B cell (primary cell): ENCODE measurements at regions of chr11 and their contacts with region 1.

Region 1: GRCh38 chr11:19951558-19952115 is 208.6 kb downstream of the DBX1 start:
- DNase-seq: peak; percentile 66
- ATAC-seq: peak; percentile 47
- H3K4me3 ChIP-seq: peak overlapping the region; percentile 27 to 61 (median 46)
- H3K4me3 Mint-ChIP-seq: peak overlapping the region; percentile 77
- H3K27ac ChIP-seq: no peak overlapping the region
- H3K27ac Mint-ChIP-seq: no peak overlapping the region
- H3K4me1 ChIP-seq: peaks cover 4% of the 10 kb centered on the region in 2 donors
- H3K4me1 Mint-ChIP-seq: peaks cover 8% of the 10 kb centered on the region
- H3K27me3 ChIP-seq: peaks cover 0 to 4% (median 2%) of the 10 kb centered on the region in 4 experiments
- H3K27me3 Mint-ChIP-seq: peaks cover 35% of the 10 kb centered on the region
- CTCF ChIP-seq: peak; percentile 79

Region 2: GRCh38 chr11:19628018-19628417 is 323.6 kb before region 1 on chr11:
- CTCF ChIA-PET with region 1: no interaction called
- POLR2A ChIA-PET with region 1: no interaction called
- intact Hi-C with region 1: no loop called
- DNase-seq: no peak
- ATAC-seq: no peak
- H3K4me3 ChIP-seq: no peak overlapping the region
- H3K4me3 Mint-ChIP-seq: no peak overlapping the region
- H3K27ac ChIP-seq: no peak overlapping the region
- H3K27ac Mint-ChIP-seq: no peak overlapping the region
- H3K4me1 ChIP-seq: no peaks in the 10 kb centered on the region
- H3K4me1 Mint-ChIP-seq: no peaks in the 10 kb centered on the region
- H3K27me3 ChIP-seq: peaks cover 0 to 7% (median 0%) of the 10 kb centered on the region in 4 experiments
- H3K27me3 Mint-ChIP-seq: peaks cover 20% of the 10 kb centered on the region
- CTCF ChIP-seq: no peak

Region 3: GRCh38 chr11:19938169-19938856 is 13.3 kb before region 1 on chr11:
- CTCF ChIA-PET with region 1: interaction called, 12 read pairs
- POLR2A ChIA-PET with region 1: no interaction called
- intact Hi-C with region 1: no loop called
- DNase-seq: peak; percentile 42
- ATAC-seq: no peak
- H3K4me3 ChIP-seq: no peak overlapping the region
- H3K4me3 Mint-ChIP-seq: no peak overlapping the region
- H3K27ac ChIP-seq: no peak overlapping the region
- H3K27ac Mint-ChIP-seq: no peak overlapping the region
- H3K4me1 ChIP-seq: no peaks in the 10 kb centered on the region
- H3K4me1 Mint-ChIP-seq: peaks cover 11% of the 10 kb centered on the region
- H3K27me3 ChIP-seq: peaks cover 0 to 2% (median 0%) of the 10 kb centered on the region in 4 experiments
- H3K27me3 Mint-ChIP-seq: peaks cover 38% of the 10 kb centered on the region
- CTCF ChIP-seq: peak; percentile 75

Region 4: DNA sequence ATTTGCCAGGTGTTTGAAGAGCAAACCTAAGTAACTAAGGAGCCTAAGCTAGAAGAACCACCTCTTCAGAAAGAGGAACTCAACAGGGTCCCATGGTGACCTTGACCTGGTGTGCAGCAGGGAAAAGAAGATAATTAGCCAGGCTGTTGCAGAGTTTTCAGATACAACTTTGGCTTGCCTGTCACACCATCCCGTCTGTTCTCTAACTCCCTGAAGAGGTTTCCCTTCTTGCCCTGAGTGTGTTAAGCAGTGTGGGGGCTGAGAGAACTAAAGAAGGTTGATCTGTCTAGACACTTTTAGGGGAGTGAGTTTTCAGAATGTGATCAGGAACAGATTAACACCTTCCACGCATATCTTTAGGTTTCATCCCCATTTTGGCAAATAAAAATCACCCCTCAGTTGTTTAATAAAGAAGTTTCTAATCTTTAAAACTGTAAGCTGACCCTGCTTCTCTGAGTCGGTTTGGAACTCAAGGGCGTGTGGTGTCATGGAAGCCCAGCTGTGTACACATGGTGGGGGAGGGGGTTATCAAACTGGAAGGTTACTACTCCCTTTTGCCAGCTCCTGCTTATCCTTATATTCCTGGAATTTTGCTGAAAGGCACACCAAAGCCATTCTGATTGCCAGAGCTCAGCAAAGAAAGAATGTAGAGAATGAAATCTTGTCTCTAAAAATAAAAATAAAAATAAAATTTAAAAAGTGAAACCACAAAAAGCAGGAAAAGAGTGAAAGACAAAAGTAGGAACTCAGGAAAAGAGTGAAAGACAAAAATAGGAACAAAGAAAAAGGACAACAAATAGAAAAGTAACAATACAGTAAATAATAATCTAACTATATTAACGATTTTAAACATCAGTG is 138.4 kb after region 1 on chr11:
- CTCF ChIA-PET with region 1: no interaction called
- POLR2A ChIA-PET with region 1: no interaction called
- intact Hi-C with region 1: loop called (anchors 10 kb)
- DNase-seq: peak; percentile 16
- ATAC-seq: no peak
- H3K4me3 ChIP-seq: no peak overlapping the region
- H3K4me3 Mint-ChIP-seq: no peak overlapping the region
- H3K27ac ChIP-seq: no peak overlapping the region
- H3K27ac Mint-ChIP-seq: no peak overlapping the region
- H3K4me1 ChIP-seq: peaks cover 18 to 26% of the 10 kb centered on the region in 2 donors
- H3K4me1 Mint-ChIP-seq: peaks cover 26% of the 10 kb centered on the region
- H3K27me3 ChIP-seq: peaks cover 0 to 5% (median under 1%) of the 10 kb centered on the region in 4 experiments
- H3K27me3 Mint-ChIP-seq: peaks cover 14% of the 10 kb centered on the region
- CTCF ChIP-seq: no peak

Region 5: DNA sequence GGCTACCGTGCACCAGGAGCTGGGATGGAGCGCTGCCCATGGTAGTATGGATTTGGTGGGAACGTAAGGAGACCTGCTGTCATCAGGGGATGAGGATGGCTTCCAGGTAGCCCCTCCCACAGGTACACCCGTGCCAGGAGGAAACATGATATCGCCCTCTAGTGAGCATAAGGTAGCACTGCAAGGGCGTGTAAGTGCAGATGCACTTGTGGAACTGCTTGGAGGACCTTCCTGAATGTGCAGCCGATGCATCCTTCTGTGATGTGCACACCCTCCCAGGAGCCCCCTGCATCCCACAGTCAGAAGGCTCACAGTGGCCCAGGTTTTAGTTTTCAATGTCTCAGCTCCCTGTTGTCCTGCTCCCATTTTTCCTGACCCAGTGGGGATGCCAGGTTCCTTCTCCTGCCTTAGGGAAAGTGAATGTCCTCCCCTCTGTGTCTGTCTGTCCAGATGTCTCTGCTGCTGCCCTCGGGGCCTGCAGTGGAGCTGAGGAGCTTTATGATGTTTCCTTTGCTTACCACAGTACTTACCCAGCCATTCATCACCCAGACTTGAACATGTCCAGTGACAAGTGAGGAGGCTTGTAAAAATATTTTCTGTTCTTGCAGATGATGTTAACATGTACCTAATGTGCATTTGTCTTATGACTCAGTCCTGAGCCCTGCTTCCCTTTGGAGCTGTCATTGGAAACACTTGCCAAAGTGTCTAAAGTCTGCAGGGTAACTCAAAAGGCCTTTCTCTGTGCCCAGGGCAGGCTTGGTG is 159.5 kb after region 1 on chr11:
- CTCF ChIA-PET with region 1: interaction called, 28 read pairs
- POLR2A ChIA-PET with region 1: no interaction called
- intact Hi-C with region 1: loop called (anchors 1 kb)
- DNase-seq: peak; percentile 61
- ATAC-seq: peak; percentile 75
- H3K4me3 ChIP-seq: no peak overlapping the region
- H3K4me3 Mint-ChIP-seq: no peak overlapping the region
- H3K27ac ChIP-seq: no peak overlapping the region
- H3K27ac Mint-ChIP-seq: no peak overlapping the region
- H3K4me1 ChIP-seq: peaks cover 0 to 4% of the 10 kb centered on the region in 2 donors
- H3K4me1 Mint-ChIP-seq: peaks cover 3% of the 10 kb centered on the region
- H3K27me3 ChIP-seq: no peaks in the 10 kb centered on the region
- H3K27me3 Mint-ChIP-seq: peaks cover 12% of the 10 kb centered on the region
- CTCF ChIP-seq: peak; percentile 76